ENCODE measurements at regions of chr3 and their contacts with region 1.

Region 1: GRCh38 chr3:177478170-177478860 is 281.0 kb upstream of the TBL1XR1 start:
- DNase-seq: peak; percentile 98
- H3K4me3 Mint-ChIP-seq: peak overlapping the region; percentile 19
- H3K27ac Mint-ChIP-seq: peak overlapping the region; percentile 92
- H3K4me1 Mint-ChIP-seq: peaks cover 23% of the 10 kb centered on the region
- H3K27me3 Mint-ChIP-seq: no peaks in the 10 kb centered on the region
- CTCF ChIP-seq: no peak

Region 2: DNA sequence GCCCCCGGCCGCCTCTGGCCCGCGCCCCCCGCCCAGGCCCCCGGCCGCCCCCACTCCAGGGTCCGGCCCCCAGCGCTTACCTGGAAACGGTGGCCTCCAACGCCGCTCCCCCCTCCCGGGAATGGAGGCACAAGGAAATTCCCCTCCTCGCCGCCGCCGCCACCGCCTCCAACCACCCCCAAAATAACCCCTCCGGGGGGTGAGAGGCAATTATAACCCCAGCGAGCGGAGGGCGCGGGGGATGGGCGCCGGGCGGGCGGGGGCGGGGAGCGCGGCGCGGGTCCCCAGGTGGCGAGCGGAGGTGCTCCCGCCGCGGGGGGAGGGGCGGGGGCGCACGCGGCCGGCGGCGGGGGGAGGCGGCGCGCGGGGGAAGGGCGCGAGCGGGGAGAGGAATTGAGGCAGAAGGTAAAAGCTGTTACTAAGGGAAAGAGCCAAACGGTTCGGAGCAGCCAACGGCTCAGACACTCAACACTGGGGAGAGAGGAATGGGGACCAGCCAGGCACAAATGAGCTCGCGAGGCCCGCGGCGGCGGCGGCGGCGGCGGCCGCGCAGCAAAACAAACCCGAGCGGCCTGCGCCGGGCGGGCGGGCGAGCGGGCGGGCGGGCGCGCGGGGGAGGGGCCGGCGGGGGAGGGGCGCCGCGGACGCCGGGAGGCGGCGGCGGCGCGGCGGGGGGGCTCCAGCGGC is 281.1 kb before region 1 on chr3 and contains the start of gene TBL1XR1:
- CTCF ChIA-PET with region 1: no interaction called
- POLR2A ChIA-PET with region 1: interaction called, 14 read pairs
- intact Hi-C with region 1: loop called (anchors 1 kb)
- DNase-seq: peak; percentile 95
- H3K4me3 Mint-ChIP-seq: peak within 1 kb of the TSS; percentile 97
- H3K27ac Mint-ChIP-seq: peak within 1 kb of the TSS; percentile 89
- H3K4me1 Mint-ChIP-seq: peaks cover 30% of the 10 kb centered on the region
- H3K27me3 Mint-ChIP-seq: no peaks in the 10 kb centered on the region
- CTCF ChIP-seq: no peak
- total RNA-seq, gene TBL1XR1: 171 and 178 TPM in 2 replicates

Region 3: GRCh38 chr3:177498037-177498856 is 19.9 kb after region 1 on chr3:
- CTCF ChIA-PET with region 1: interaction called, 3 read pairs
- POLR2A ChIA-PET with region 1: interaction called, 4 read pairs
- intact Hi-C with region 1: loop called (anchors 1 kb)
- DNase-seq: peak; percentile 98
- H3K4me3 Mint-ChIP-seq: no peak overlapping the region
- H3K27ac Mint-ChIP-seq: no peak overlapping the region
- H3K4me1 Mint-ChIP-seq: peaks cover 6% of the 10 kb centered on the region
- H3K27me3 Mint-ChIP-seq: no peaks in the 10 kb centered on the region
- CTCF ChIP-seq: no peak

Region 4: GRCh38 chr3:177597311-177598096 is 119.2 kb after region 1 on chr3:
- CTCF ChIA-PET with region 1: interaction called, 3 read pairs
- POLR2A ChIA-PET with region 1: interaction called, 14 read pairs
- intact Hi-C with region 1: loop called (anchors 10 kb)
- DNase-seq: peak; percentile 94
- H3K4me3 Mint-ChIP-seq: no peak overlapping the region
- H3K27ac Mint-ChIP-seq: peak overlapping the region; percentile 93
- H3K4me1 Mint-ChIP-seq: peaks cover 61% of the 10 kb centered on the region
- H3K27me3 Mint-ChIP-seq: no peaks in the 10 kb centered on the region
- CTCF ChIP-seq: no peak

Region 5: DNA sequence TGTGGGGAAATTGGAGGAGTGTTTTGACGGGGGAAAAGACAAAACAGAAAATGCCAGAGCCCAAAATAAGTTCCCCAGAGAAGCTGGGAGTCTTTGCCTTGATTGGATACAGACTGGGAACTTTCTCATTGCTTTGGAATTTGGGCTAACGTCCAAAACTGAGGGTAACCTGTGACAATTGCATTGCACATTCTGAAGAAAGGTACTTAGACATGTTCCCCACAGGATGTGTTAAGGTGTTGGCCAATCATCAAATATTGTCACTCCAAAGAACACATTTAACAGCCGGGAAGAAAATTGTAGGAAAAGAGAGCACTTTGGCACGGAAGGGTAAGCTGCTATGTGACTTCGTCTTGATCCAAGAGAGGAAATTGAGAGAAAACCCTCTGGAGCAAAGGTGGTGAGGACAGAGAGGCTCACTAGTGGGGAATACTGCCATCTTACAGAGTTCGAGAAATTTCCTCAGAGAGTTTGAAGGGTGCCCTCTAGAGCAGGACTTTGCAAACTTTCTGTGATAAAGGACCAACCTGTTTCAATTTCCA is 338.4 kb after region 1 on chr3:
- CTCF ChIA-PET with region 1: no interaction called
- POLR2A ChIA-PET with region 1: interaction called, 7 read pairs
- intact Hi-C with region 1: loop called (anchors 10 kb)
- DNase-seq: peak; percentile 98
- H3K4me3 Mint-ChIP-seq: peak overlapping the region; percentile 48
- H3K27ac Mint-ChIP-seq: peak overlapping the region; percentile 89
- H3K4me1 Mint-ChIP-seq: peaks cover 40% of the 10 kb centered on the region
- H3K27me3 Mint-ChIP-seq: no peaks in the 10 kb centered on the region
- CTCF ChIP-seq: peak; percentile 34